ENCODE measurements at regions of chr14 and their contacts with region 1.

Region 1: GRCh38 chr14:69129264-69129880 is 23.5 kb downstream of the DCAF5 start:
- DNase-seq: peak; percentile 64
- ATAC-seq: peak; percentile 90
- H3K4me3 Mint-ChIP-seq: no peak overlapping the region; the same call in 1 of the 2 replicates
- H3K27ac Mint-ChIP-seq: peak overlapping the region; percentile 46
- H3K4me1 Mint-ChIP-seq: peaks cover 10% of the 10 kb centered on the region
- H3K27me3 Mint-ChIP-seq: no peaks in the 10 kb centered on the region
- CTCF ChIP-seq: peak; percentile 85

Region 2: DNA sequence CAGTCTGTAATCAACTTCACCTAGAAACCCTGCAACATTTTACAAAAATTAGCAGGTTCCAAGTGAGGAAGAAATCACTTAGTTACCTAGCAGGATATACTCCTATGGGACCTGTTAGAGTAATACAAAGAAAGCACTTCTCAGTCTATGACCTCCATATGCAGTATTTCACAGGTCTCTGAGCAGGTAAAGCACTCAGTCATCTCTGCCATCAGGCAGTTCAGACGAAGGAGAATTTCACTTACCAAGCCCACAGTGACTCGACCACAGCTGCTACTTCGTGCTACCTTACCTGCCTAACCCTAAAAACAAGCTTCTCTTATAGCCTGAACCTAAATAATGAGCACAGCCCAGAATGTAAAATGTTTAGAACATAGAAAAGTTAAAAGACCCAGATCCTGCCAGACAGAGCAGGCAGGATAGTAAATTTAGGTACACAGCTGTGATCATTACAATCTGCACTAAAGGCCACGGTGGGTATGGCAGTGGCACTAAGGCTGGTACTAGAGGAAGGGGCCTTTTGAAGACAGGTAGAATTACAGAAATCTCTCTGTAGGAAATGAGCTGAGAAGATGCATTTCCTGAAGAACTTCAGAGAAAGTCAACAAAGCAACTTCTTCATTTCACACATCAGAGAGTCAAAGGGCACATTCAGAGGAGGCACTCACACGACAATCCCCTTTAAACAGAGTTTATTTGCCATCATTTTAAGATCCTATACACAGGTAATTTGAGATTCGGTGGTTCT is 12.2 kb before region 1 on chr14:
- CTCF ChIA-PET with region 1: interaction called, 10 read pairs
- POLR2A ChIA-PET with region 1: interaction called, 3 read pairs
- DNase-seq: no peak
- ATAC-seq: no peak
- H3K4me3 Mint-ChIP-seq: no peak overlapping the region
- H3K27ac Mint-ChIP-seq: no peak overlapping the region
- H3K4me1 Mint-ChIP-seq: no peaks in the 10 kb centered on the region
- H3K27me3 Mint-ChIP-seq: no peaks in the 10 kb centered on the region
- CTCF ChIP-seq: no peak

Region 3: GRCh38 chr14:69161590-69161989 is 32.2 kb after region 1 on chr14:
- CTCF ChIA-PET with region 1: no interaction called
- POLR2A ChIA-PET with region 1: no interaction called
- DNase-seq: no peak
- ATAC-seq: no peak
- H3K4me3 Mint-ChIP-seq: no peak overlapping the region
- H3K27ac Mint-ChIP-seq: no peak overlapping the region
- H3K4me1 Mint-ChIP-seq: no peaks in the 10 kb centered on the region
- H3K27me3 Mint-ChIP-seq: peaks cover 32% of the 10 kb centered on the region
- CTCF ChIP-seq: no peak

Measured in WTC11 (cell line).